ENCODE measurements at regions of chr1 and their contacts with region 1.

Region 1: DNA sequence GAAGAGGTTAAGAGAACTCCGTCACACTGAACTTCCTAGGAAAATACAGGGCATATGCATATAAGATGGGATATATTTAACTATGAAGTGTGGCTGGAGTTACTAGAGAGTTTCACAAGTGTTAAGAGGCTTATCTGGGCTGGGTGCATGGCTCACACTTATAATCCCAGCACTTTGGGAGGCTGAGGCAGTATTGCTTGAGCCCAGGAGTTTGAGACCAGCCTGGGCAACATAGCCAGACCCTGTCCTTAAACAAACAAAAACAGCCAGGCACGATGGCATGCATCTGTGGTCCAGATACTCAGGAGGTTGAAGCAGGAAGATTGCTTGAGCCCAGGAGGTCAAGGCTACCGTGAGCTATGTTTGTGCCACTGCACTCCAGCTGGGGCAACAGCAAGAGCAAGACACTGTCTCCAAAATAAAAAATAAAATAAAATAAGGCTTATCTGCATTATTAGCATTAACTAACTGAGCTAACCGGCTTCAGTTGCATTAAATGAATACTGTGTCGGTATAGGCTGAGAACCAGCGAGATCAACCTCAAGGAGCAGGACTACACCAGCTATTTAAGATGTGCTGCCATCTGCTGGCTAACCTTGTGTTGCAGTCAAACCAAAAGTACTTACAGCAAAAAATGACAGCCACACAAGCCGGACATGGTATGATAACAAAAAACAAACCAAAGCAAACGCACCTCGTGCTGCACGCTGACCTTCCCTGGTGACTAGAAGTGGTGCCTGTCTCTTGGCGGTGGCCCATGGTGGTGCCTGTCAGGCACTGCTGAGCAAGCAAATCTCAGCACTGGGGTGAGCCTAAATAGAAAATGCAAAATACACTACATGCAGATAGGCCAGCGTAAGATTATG is 19.7 kb upstream of the RBBP5 start:
- DNase-seq: peak; percentile 67
- H3K4me3 ChIP-seq: peak overlapping the region in 1 of 2 experiments; percentile 33; a peak in 1 of 4 replicates
- H3K27ac ChIP-seq: no peak overlapping the region
- H3K4me1 ChIP-seq: peaks cover 5 to 10% of the 10 kb centered on the region in 2 experiments
- H3K27me3 ChIP-seq: no peaks in the 10 kb centered on the region
- CTCF ChIP-seq: peak; percentile 94
- EP300 ChIP-seq: no peak
- RAD21 ChIP-seq: peak; percentile 67

Region 2: GRCh38 chr1:204975570-204976235 is 165.8 kb before region 1 on chr1:
- CTCF ChIA-PET with region 1: interaction called, 21 read pairs
- POLR2A ChIA-PET with region 1: no interaction called
- DNase-seq: peak; percentile 88
- H3K4me3 ChIP-seq: no peak overlapping the region; a peak in 1 of 4 replicates
- H3K27ac ChIP-seq: no peak overlapping the region
- H3K4me1 ChIP-seq: peaks cover 0 to 11% of the 10 kb centered on the region in 2 experiments; a peak in 2 of 4 replicates
- H3K27me3 ChIP-seq: no peaks in the 10 kb centered on the region
- CTCF ChIP-seq: peak; percentile 77
- EP300 ChIP-seq: no peak
- RAD21 ChIP-seq: peak; percentile 79

Region 3: GRCh38 chr1:205121660-205122488 is 19.6 kb before region 1 on chr1 and contains the start of gene RBBP5:
- CTCF ChIA-PET with region 1: interaction called, 17 read pairs
- POLR2A ChIA-PET with region 1: no interaction called
- DNase-seq: peak; percentile 84
- H3K4me3 ChIP-seq: peak within 1 kb of the TSS; percentile 80 to 92
- H3K27ac ChIP-seq: peak within 1 kb of the TSS; percentile 87 to 96
- H3K4me1 ChIP-seq: peaks cover 11 to 17% of the 10 kb centered on the region in 2 experiments; a peak in 3 of 4 replicates
- H3K27me3 ChIP-seq: no peaks in the 10 kb centered on the region
- CTCF ChIP-seq: peak; percentile 84
- EP300 ChIP-seq: peak in 1 of 2 experiments; percentile 36; a peak in 1 of 4 replicates
- RAD21 ChIP-seq: peak; percentile 55
- polyA plus RNA-seq, gene RBBP5: 5.7 and 7.7 TPM in 2 replicates

Region 4: DNA sequence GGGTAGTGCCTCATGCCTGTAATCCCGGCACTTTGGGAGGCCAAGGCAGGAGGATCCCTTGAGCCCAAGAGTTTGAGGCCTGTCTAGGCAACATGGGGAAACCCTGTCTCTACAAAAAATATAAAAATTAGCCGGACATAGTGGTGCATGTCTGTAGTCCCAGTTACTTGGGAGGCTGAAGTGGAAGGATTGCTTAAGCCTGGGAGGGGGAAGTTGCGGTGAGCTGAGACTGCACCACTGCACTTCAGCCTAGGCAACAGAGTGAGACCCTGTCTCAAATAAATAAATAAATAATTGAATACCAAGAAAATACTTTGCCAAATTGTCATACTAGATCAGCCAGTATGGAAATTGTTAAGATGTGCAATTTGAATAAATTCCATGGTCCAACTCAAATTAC is 13.8 kb before region 1 on chr1:
- CTCF ChIA-PET with region 1: interaction called, 22 read pairs
- POLR2A ChIA-PET with region 1: no interaction called
- DNase-seq: no peak
- H3K4me3 ChIP-seq: no peak overlapping the region
- H3K27ac ChIP-seq: no peak overlapping the region
- H3K4me1 ChIP-seq: peaks cover 2 to 3% of the 10 kb centered on the region in 2 experiments; a peak in 1 of 4 replicates
- H3K27me3 ChIP-seq: no peaks in the 10 kb centered on the region
- CTCF ChIP-seq: no peak
- EP300 ChIP-seq: no peak
- RAD21 ChIP-seq: no peak

Measured in SK-N-SH (cell line).